Heart left ventricle (tissue), 16 donors: ENCODE measurements at regions of chr3 and their contacts with region 1.

Region 1: GRCh38 chr3:88957711-88958439 is 149.5 kb upstream of the EPHA3 start:
- DNase-seq: no peak
- ATAC-seq: peak in 3 of 4 donors; percentile 18 to 68 (median 27)
- H3K4me3 ChIP-seq: no peak overlapping the region
- H3K27ac ChIP-seq: peak overlapping the region in 1 of 12 donors; percentile 56
- H3K4me1 ChIP-seq: peaks cover 0 to 16% (median 5%) of the 10 kb centered on the region in 12 donors
- H3K27me3 ChIP-seq: no peaks in the 10 kb centered on the region
- CTCF ChIP-seq: no peak
- POLR2A ChIP-seq: no peak

Region 2: GRCh38 chr3:88863196-88863595 is 94.7 kb before region 1 on chr3:
- intact Hi-C with region 1: no loop called
- DNase-seq: no peak
- ATAC-seq: no peak
- H3K4me3 ChIP-seq: no peak overlapping the region
- H3K27ac ChIP-seq: no peak overlapping the region
- H3K4me1 ChIP-seq: no peaks in the 10 kb centered on the region
- H3K27me3 ChIP-seq: no peaks in the 10 kb centered on the region
- CTCF ChIP-seq: no peak
- POLR2A ChIP-seq: no peak

Region 3: DNA sequence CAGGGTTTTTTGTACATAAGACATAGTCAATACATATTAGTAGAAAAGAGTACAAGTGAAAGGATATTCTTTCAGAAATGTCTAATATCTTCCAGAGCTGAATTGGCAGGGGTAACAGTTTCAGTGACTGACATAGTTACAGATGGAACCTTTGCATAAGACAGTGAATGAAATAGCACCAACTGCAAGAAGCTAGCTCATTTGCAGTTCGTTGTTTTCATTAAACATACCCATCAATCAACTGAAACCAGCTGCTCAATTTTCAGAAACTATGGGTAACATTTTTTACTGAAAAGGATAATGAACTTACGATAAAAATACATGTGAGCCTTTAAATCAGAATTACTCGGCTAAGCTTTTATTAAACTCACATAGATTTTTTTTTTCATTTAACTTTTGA is 55.7 kb after region 1 on chr3:
- intact Hi-C with region 1: loop called in 1 of 10 experiments (anchors 10 kb)
- DNase-seq: no peak
- ATAC-seq: no peak
- H3K4me3 ChIP-seq: no peak overlapping the region
- H3K27ac ChIP-seq: no peak overlapping the region
- H3K4me1 ChIP-seq: no peaks in the 10 kb centered on the region
- H3K27me3 ChIP-seq: no peaks in the 10 kb centered on the region
- CTCF ChIP-seq: no peak
- POLR2A ChIP-seq: no peak

Region 4: DNA sequence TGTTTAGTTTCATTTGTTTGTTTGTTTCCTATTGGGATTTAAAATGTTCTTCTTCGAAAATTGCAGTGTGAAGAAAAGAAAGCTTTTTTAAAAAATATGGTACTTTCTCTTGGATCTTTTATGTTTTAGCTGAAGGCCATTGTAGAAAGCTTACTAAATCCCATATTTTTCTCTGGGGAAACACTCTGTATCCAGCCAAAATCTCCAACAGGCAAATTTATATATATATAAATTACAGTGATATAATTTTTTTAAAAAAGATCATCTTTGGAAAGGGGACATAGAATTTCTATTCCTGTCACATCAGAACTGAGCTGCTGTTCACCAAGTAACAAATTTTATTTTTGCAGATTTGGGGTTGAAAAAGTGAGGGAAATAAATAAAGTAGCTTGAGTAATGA is 130.0 kb after region 1 on chr3:
- intact Hi-C with region 1: no loop called
- DNase-seq: no peak
- ATAC-seq: no peak
- H3K4me3 ChIP-seq: no peak overlapping the region
- H3K27ac ChIP-seq: no peak overlapping the region
- H3K4me1 ChIP-seq: no peaks in the 10 kb centered on the region
- H3K27me3 ChIP-seq: no peaks in the 10 kb centered on the region
- CTCF ChIP-seq: no peak
- POLR2A ChIP-seq: no peak